Mammary epithelial cell (primary cell): ENCODE measurements at regions of chr4 and their contacts with region 1.

Region 1: GRCh38 chr4:173257732-173258717 is 76.1 kb downstream of the HMGB2 start:
- DNase-seq: peak; percentile 38
- H3K4me3 ChIP-seq: no peak overlapping the region
- H3K27ac ChIP-seq: no peak overlapping the region
- H3K4me1 ChIP-seq: peaks cover 2% of the 10 kb centered on the region
- H3K27me3 ChIP-seq: no peaks in the 10 kb centered on the region
- CTCF ChIP-seq: peak; percentile 84 to 91

Region 2: DNA sequence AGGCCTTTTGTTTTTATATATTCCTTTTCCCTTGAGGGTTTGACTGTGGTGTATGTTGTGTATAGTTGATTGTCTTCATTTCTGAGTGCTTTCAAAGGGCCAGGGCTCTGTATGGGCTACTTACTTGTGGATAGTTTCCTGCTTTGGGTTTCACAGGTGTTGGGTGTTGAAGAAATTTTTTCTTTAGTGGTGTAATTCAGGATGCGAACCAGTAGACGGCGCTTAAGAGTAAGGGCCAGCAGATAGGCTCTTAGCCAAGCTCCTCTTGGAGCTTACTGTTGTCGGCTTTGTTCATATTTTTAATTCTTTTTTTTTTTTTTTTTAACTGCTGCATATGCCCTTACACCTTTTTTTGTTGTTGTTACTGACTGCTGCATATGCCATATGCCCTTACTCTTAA is 365.7 kb before region 1 on chr4:
- CTCF ChIA-PET with region 1: interaction called, 5 read pairs
- dilution Hi-C with region 1: no loop called
- in situ Hi-C with region 1: loop called (anchors 25 kb)
- intact Hi-C with region 1: loop called (anchors 5 kb)
- DNase-seq: peak; percentile 25
- H3K4me3 ChIP-seq: no peak overlapping the region
- H3K27ac ChIP-seq: no peak overlapping the region
- H3K4me1 ChIP-seq: no peaks in the 10 kb centered on the region
- H3K27me3 ChIP-seq: no peaks in the 10 kb centered on the region
- CTCF ChIP-seq: peak; percentile 93 to 94

Region 3: DNA sequence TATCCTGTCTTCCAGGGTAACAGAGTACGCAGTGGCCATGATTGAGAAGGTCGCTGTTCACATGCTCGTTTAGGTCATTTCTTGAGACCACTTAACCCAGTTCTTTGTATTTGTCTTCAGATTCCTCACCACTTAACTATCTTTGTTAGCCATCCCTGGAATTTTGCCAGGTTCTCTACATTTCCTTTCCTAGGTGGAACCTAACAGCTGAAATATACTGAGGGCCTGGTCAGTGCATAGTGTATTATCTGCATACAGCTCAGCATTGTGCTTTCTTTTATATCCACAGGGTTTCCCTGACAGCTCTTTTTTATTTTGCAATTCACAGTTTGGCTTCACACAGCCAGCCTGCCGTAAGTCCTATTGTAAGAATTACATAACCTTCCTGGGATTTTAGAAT is 238.3 kb before region 1 on chr4:
- CTCF ChIA-PET with region 1: interaction called, 6 read pairs
- dilution Hi-C with region 1: loop called (anchors 25 kb)
- in situ Hi-C with region 1: loop called (anchors 5 kb)
- intact Hi-C with region 1: no loop called
- DNase-seq: no peak
- H3K4me3 ChIP-seq: no peak overlapping the region
- H3K27ac ChIP-seq: no peak overlapping the region
- H3K4me1 ChIP-seq: no peaks in the 10 kb centered on the region
- H3K27me3 ChIP-seq: no peaks in the 10 kb centered on the region
- CTCF ChIP-seq: no peak

Region 4: GRCh38 chr4:173025131-173025530 is 232.9 kb before region 1 on chr4:
- CTCF ChIA-PET with region 1: interaction called, 6 read pairs
- dilution Hi-C with region 1: loop called (anchors 25 kb)
- in situ Hi-C with region 1: loop called in 1 of 2 experiments (anchors 5 kb)
- intact Hi-C with region 1: loop called (anchors 1 kb)
- DNase-seq: peak; percentile 58
- H3K4me3 ChIP-seq: no peak overlapping the region
- H3K27ac ChIP-seq: no peak overlapping the region
- H3K4me1 ChIP-seq: no peaks in the 10 kb centered on the region
- H3K27me3 ChIP-seq: no peaks in the 10 kb centered on the region
- CTCF ChIP-seq: peak; percentile 62 to 79